ENCODE measurements at regions of chr12 and their contacts with region 1.

Region 1: DNA sequence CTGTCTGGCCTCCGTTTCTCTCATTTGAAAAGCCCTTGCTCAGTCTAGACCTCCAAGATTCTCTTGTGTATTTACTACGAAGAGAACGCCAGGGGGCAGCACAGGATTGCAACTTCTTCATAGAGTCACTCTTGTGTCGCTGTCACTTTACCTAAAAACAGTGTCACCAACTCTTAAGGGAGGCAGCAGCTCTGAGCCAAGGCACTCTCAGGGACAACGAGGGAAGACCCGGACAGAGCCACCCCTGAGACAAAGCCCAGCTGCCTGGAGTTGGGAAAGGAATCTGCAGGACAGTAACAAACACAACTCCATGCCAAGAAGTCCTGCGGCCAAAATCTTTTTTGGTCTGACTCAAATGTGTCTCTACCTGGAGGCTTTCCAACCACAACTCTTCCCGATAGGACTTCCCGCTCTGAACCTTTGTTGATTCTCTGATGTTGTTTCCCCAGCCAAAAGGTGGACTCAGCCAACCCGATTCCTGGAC is 9.6 kb upstream of the RPAP3 start:
- DNase-seq: no peak
- ATAC-seq: peak; percentile 92
- H3K4me3 ChIP-seq: no peak overlapping the region
- H3K27ac ChIP-seq: no peak overlapping the region
- H3K4me1 ChIP-seq: no peaks in the 10 kb centered on the region
- H3K27me3 ChIP-seq: no peaks in the 10 kb centered on the region
- CTCF ChIP-seq: peak; percentile 65 to 88 (median 75); a peak in 5 of 6 replicates
- EP300 ChIP-seq: no peak
- POLR2A ChIP-seq: no peak
- RAD21 ChIP-seq: peak; percentile 92

Region 2: GRCh38 chr12:47570151-47570550 is 145.3 kb before region 1 on chr12:
- CTCF ChIA-PET with region 1: no interaction called
- POLR2A ChIA-PET with region 1: no interaction called
- RAD21 ChIA-PET with region 1: no interaction called
- SMC1A ChIA-PET with region 1: no interaction called
- in situ Hi-C with region 1: no loop called
- intact Hi-C with region 1: no loop called
- DNase-seq: no peak
- ATAC-seq: no peak
- H3K4me3 ChIP-seq: no peak overlapping the region
- H3K27ac ChIP-seq: no peak overlapping the region
- H3K4me1 ChIP-seq: no peaks in the 10 kb centered on the region
- H3K27me3 ChIP-seq: 0 out of 4 replicates have a peak, but pooled peaks cover 0 to 2% of the 10 kb centered on the region in 2 experiments
- CTCF ChIP-seq: no peak
- EP300 ChIP-seq: no peak
- POLR2A ChIP-seq: no peak
- RAD21 ChIP-seq: no peak

Region 3: DNA sequence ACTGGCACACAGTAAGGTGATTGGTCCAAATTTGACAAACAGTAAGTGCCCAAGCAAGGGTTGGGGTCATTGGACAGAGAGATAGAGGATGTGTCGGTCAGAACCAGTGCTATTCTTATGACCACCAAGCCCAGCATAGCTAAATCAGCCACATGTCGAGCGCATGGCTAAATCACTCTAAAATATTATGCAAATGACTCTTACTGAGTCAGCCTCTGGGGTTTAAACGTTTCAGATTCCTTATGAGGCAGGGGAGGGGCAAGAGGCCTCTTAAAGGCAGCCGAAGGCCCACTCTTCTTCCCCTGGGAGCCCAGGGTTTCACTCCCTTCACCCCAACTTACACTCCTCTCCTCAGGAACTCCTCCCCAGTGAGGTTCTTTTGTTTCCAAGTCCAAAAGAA is 10.5 kb after region 1 on chr12:
- CTCF ChIA-PET with region 1: interaction called, 32 read pairs
- POLR2A ChIA-PET with region 1: no interaction called
- RAD21 ChIA-PET with region 1: interaction called, 5 read pairs
- SMC1A ChIA-PET with region 1: interaction called, 14 read pairs
- in situ Hi-C with region 1: no loop called
- intact Hi-C with region 1: no loop called
- DNase-seq: no peak
- ATAC-seq: peak; percentile 90
- H3K4me3 ChIP-seq: no peak overlapping the region
- H3K27ac ChIP-seq: no peak overlapping the region
- H3K4me1 ChIP-seq: peaks cover 18% of the 10 kb centered on the region
- H3K27me3 ChIP-seq: no peaks in the 10 kb centered on the region
- CTCF ChIP-seq: no peak
- EP300 ChIP-seq: no peak
- POLR2A ChIP-seq: no peak
- RAD21 ChIP-seq: no peak

Region 4: DNA sequence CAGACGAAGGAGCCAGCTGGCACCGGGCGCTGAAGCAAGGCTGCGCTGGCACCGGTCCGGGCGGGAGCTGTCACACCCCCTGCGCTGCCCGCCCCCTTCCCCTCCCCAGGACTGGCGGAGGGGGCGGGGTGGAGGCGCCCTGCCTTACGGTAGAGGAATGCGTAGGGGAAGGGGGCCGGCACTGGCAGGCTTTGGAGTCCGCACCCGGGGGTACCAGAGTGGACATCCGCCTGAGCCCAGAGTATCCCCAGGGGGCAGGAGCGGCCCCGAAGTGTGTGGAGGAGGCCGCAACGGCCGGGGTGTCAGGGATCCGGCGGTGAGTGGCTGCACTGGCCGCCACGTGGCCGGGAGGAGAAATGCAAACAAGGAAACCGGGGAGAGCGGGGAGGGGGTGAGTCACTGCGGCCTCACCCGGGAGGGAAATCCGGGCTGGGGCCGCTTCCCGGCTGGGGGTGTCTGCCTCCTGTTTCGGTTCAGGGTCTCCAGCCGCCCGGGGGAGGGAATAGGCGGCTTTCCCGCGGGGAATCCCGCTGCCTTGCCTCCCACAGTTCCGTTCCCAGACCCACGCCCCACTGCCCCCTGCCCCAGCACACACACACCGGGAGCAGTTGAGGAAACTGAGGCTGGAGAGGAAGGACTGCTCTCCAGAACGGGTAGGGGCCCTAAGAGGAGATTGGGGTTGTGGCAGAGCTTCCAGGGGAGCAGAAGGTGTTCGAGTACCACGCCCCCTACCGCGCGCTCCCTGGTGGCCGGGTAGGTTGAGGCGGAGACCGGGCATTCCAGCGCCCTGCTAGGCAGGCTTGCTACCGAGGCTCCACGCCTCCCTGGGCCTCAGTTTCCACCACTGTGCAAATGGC is 43.6 kb after region 1 on chr12 and contains the start of gene RAPGEF3:
- CTCF ChIA-PET with region 1: interaction called, 86 read pairs
- POLR2A ChIA-PET with region 1: interaction called, 4 read pairs
- RAD21 ChIA-PET with region 1: interaction called, 4 read pairs
- SMC1A ChIA-PET with region 1: interaction called, 14 read pairs
- in situ Hi-C with region 1: no loop called
- intact Hi-C with region 1: no loop called
- DNase-seq: no peak
- ATAC-seq: peak; percentile 68
- H3K4me3 ChIP-seq: peak within 1 kb of the TSS; percentile 66
- H3K27ac ChIP-seq: no peak within 1 kb of the TSS
- H3K4me1 ChIP-seq: peaks cover 37% of the 10 kb centered on the region
- H3K27me3 ChIP-seq: no peaks in the 10 kb centered on the region
- CTCF ChIP-seq: peak; percentile 36 to 68 (median 51); a peak in 5 of 6 replicates
- EP300 ChIP-seq: no peak
- POLR2A ChIP-seq: peak; percentile 21; the same call in 1 of the 2 replicates
- RAD21 ChIP-seq: no peak
- polyA plus RNA-seq, gene RAPGEF3: 0.02 TPM in 1 of 2 experiments, not detected in the other

Region 5: GRCh38 chr12:47779301-47779942 is 64.0 kb after region 1 on chr12:
- CTCF ChIA-PET with region 1: interaction called, 114 read pairs
- POLR2A ChIA-PET with region 1: no interaction called
- RAD21 ChIA-PET with region 1: interaction called, 34 read pairs
- SMC1A ChIA-PET with region 1: interaction called, 5 read pairs
- in situ Hi-C with region 1: loop called (anchors 5 kb)
- intact Hi-C with region 1: loop called (anchors 1 kb)
- DNase-seq: peak; percentile 53
- ATAC-seq: peak; percentile 95
- H3K4me3 ChIP-seq: no peak overlapping the region
- H3K27ac ChIP-seq: no peak overlapping the region
- H3K4me1 ChIP-seq: peaks cover 11% of the 10 kb centered on the region; the same call in 1 of the 2 replicates
- H3K27me3 ChIP-seq: no peaks in the 10 kb centered on the region
- CTCF ChIP-seq: peak; percentile 92 to 97 (median 95)
- EP300 ChIP-seq: no peak
- POLR2A ChIP-seq: no peak; the same call in none of the 2 replicates
- RAD21 ChIP-seq: peak; percentile 95